ENCODE measurements at regions of chr5 and their contacts with region 1.

Region 1: GRCh38 chr5:139273572-139274289 is 19.8 kb upstream of the MATR3 start:
- DNase-seq: peak; percentile 89
- ATAC-seq: peak; percentile 91
- H3K4me3 Mint-ChIP-seq: peak overlapping the region; percentile 90
- H3K27ac Mint-ChIP-seq: peak overlapping the region; percentile 73
- H3K4me1 Mint-ChIP-seq: peaks cover 59% of the 10 kb centered on the region
- H3K27me3 Mint-ChIP-seq: peaks cover 4% of the 10 kb centered on the region

Region 2: DNA sequence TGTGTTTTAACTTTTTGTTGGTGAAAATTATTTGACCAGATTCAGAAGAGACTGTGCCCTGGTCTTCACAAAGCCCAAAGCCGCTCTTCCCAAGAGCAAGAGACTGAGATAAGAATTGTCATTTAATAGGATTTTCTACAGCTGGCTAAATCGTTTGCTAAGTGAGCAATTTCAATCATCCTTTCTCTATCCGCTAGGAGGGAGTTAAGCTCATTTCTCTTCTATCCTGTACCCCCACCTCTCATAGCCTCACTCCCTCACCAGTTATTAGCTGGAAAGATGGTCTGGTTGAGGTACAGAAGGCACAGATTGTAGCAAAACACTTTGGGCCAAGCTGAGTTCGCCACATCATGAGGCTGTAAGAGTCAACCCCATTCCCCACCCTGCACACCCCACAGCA is 32.6 kb before region 1 on chr5:
- CTCF ChIA-PET with region 1: no interaction called
- POLR2A ChIA-PET with region 1: no interaction called
- DNase-seq: no peak
- ATAC-seq: no peak
- H3K4me3 Mint-ChIP-seq: no peak overlapping the region
- H3K27ac Mint-ChIP-seq: no peak overlapping the region
- H3K4me1 Mint-ChIP-seq: peaks cover 5% of the 10 kb centered on the region
- H3K27me3 Mint-ChIP-seq: peaks cover 23% of the 10 kb centered on the region

Region 3: GRCh38 chr5:139251281-139251687 is 22.4 kb before region 1 on chr5:
- CTCF ChIA-PET with region 1: interaction called, 16 read pairs
- POLR2A ChIA-PET with region 1: interaction called, 4 read pairs
- DNase-seq: peak; percentile 57
- ATAC-seq: peak; percentile 23
- H3K4me3 Mint-ChIP-seq: no peak overlapping the region
- H3K27ac Mint-ChIP-seq: no peak overlapping the region
- H3K4me1 Mint-ChIP-seq: peaks cover 22% of the 10 kb centered on the region
- H3K27me3 Mint-ChIP-seq: peaks cover 2% of the 10 kb centered on the region

Region 4: GRCh38 chr5:139287890-139288635 is 14.3 kb after region 1 on chr5:
- CTCF ChIA-PET with region 1: interaction called, 11 read pairs
- POLR2A ChIA-PET with region 1: interaction called, 64 read pairs
- DNase-seq: no peak
- ATAC-seq: peak; percentile 14
- H3K4me3 Mint-ChIP-seq: no peak overlapping the region
- H3K27ac Mint-ChIP-seq: peak overlapping the region; percentile 23
- H3K4me1 Mint-ChIP-seq: peaks cover 11% of the 10 kb centered on the region
- H3K27me3 Mint-ChIP-seq: no peaks in the 10 kb centered on the region

Region 5: DNA sequence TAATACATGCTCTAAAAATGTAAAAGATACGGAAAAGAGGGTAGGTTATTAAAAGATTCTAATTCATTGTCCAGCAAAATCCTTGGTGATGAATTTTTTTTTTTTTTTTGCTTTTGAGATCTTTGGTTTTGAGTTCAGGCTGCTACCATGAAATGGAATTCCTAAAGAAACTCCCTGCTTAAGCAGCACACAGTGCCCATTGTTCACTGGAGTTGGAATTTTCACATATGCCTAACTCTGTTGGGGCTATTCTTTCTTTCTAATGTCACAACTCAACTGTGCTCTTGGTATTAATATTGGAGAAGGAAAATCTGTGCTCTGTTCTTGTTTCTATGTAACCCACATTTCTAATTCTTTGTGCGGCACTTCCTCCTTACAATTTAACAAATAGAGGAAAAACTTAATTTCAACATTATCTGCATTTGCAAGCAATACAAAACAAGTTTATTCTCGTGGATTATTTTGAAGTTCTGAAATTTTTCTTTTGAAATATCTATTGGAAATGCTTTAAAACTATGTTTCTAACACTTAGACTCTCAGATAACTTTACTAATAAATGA is 41.4 kb after region 1 on chr5:
- CTCF ChIA-PET with region 1: no interaction called
- POLR2A ChIA-PET with region 1: no interaction called
- DNase-seq: no peak
- ATAC-seq: no peak
- H3K4me3 Mint-ChIP-seq: no peak overlapping the region
- H3K27ac Mint-ChIP-seq: no peak overlapping the region
- H3K4me1 Mint-ChIP-seq: peaks cover 18% of the 10 kb centered on the region
- H3K27me3 Mint-ChIP-seq: no peaks in the 10 kb centered on the region

Region 6: DNA sequence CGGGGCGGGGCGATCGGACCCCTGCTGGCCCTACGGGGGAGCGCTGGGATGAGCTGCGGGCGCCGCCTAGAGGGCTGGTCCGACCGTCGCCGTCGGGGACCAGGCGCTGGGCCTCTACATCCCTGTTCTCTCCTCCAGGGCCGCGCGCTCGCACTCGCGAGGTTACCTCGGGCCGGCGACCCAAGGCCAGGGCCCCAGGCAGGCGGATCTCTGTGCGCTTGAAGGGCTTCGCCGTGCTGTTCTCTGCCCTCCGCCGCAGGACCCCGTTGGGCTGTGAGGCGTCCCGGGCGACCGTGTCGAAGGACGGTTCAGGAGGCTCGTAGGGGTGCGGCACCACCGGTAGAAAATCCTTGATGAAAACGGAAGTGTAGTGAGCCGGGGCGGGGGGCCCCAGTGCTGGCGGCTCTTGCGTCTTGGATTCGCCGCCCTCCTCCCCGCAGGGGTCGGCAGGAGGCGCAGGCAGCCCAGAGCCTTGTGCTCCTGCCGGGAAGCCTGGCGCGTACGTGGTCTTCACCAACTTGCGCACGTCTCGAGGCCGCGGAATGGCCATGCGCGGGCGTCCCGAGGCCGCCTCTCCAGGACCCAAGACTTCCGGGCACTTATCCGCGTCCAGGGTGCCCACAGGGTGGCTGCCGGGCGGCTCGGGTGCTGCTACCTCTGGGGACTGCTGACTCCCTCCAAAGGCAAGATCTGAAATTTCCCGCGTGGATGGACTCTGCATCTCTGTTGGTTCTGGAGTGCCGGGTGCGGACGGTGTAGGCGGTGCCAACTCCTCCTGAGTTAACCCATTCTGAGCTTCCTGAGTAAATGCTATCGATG is 119.2 kb after region 1 on chr5:
- CTCF ChIA-PET with region 1: interaction called, 10 read pairs
- POLR2A ChIA-PET with region 1: interaction called, 3 read pairs
- DNase-seq: peak; percentile 93
- ATAC-seq: peak; percentile 73
- H3K4me3 Mint-ChIP-seq: peak overlapping the region; percentile 98
- H3K27ac Mint-ChIP-seq: peak overlapping the region; percentile 97
- H3K4me1 Mint-ChIP-seq: peaks cover 68% of the 10 kb centered on the region
- H3K27me3 Mint-ChIP-seq: no peaks in the 10 kb centered on the region